ENCODE measurements at regions of chr1 and their contacts with region 1.

Region 1: GRCh38 chr1:167721617-167722151 is at the start of gene MPZL1:
- DNase-seq: peak; percentile 98
- H3K4me3 ChIP-seq: peak within 1 kb of the TSS; percentile 91 to 99 (median 98)
- H3K27ac ChIP-seq: peak within 1 kb of the TSS; percentile 89 to 97 (median 94)
- H3K4me1 ChIP-seq: peaks cover 0 to 49% (median 35%) of the 10 kb centered on the region in 4 donors
- H3K27me3 ChIP-seq: no peaks in the 10 kb centered on the region
- CTCF ChIP-seq: no peak
- EP300 ChIP-seq: no peak
- POLR2A ChIP-seq: peak; percentile 58 to 71
- total RNA-seq, gene MPZL1: 50.9 to 69.5 (median 58.3) TPM

Region 2: DNA sequence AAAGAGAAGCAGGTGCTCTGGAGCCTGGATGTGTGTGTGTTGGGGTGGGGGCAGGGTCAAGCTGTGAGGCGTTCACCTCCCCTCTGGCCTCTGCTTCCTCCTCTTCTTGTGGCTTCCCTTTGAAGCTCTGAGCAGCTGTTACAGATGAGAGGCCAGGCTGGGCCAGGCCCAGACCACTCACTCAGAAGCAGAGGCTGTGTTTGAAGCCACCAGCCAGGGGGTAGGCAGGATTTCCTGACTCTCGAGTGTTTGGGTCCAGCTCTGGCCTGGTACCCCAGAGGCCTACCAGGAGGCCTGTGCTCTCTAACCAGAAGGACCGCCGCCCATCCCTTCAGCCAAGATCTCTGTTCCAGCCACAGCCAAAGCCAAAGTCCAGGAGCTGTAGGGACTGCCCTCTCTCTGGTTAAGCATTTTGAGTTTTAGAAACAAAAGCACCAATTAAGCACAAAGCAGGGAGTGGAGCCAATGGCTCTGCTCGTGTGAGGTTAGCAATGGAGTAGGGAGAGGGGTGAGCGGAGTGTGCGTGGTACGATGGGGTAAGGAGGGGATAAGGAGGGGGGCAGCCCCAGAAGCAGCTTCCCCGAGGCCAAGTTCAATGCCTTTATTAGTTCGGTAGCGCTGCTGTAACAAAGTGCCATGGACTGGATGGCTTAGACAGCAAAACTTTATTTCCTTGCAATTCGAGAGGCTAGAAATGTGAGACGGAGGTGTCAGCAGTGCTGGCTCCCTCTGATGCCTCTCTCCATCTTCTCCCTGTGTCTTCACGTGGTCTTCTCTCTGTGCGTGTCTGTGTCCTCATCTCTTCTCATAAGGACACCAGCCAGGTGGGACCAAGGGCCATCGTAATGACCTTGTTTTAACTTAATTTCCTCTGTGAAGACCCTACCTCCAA is 71.2 kb before region 1 on chr1:
- intact Hi-C with region 1: no loop called
- DNase-seq: no peak
- H3K4me3 ChIP-seq: no peak overlapping the region
- H3K27ac ChIP-seq: peak overlapping the region in 1 of 4 donors; percentile 52
- H3K4me1 ChIP-seq: peaks cover 0 to 14% (median 7%) of the 10 kb centered on the region in 4 donors
- H3K27me3 ChIP-seq: no peaks in the 10 kb centered on the region
- CTCF ChIP-seq: no peak
- EP300 ChIP-seq: no peak
- POLR2A ChIP-seq: no peak

Region 3: DNA sequence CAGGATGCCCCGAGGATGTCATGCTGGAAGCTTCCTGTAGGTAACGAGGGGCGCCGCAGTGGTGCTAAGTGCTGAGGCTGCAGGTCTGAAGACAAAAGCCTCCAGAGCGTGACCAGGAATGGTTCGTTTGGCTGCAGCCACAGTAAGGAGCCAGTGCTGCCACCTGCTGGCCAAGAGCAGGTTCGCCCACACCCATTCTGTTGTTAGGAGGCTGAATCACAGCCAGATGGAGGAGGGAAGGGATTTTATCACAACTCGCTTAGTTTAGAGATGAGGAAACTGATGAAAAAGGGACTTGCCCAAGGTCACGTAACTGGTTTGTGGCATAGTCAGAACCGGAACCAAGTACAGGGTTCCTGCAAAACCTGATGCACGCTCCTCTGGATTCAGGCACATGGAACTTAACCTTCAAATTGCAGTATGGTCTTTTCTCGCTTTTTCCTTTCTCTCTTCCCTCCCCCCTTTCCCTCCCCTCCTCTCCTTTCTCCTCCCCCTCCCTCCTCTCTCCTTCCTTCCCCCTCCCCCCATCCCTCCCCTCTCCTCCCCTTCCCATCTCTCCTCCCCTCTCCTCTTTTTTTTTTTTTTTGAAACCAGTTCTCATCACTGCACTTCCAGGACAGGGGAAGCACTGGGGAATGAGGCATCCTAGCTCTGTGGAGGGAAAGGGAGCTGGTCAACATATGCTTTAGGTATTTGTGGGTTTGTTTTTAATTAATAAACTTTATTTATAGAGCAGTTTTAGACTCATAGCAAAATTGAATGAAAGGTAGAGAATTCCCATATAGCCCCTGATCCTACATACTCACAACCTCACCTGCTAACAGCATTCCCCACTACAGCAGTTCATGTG is 81.9 kb after region 1 on chr1:
- intact Hi-C with region 1: loop called (anchors 2 kb)
- DNase-seq: peak; percentile 96
- H3K4me3 ChIP-seq: no peak overlapping the region
- H3K27ac ChIP-seq: no peak overlapping the region
- H3K4me1 ChIP-seq: peaks cover 0 to 6% (median 0%) of the 10 kb centered on the region in 4 donors
- H3K27me3 ChIP-seq: no peaks in the 10 kb centered on the region
- CTCF ChIP-seq: peak; percentile 73 to 92 (median 88)
- EP300 ChIP-seq: no peak
- POLR2A ChIP-seq: no peak